Cardiac septum (tissue), 1 donor: ENCODE measurements at regions of chr20 and their contacts with region 1.

Region 1: DNA sequence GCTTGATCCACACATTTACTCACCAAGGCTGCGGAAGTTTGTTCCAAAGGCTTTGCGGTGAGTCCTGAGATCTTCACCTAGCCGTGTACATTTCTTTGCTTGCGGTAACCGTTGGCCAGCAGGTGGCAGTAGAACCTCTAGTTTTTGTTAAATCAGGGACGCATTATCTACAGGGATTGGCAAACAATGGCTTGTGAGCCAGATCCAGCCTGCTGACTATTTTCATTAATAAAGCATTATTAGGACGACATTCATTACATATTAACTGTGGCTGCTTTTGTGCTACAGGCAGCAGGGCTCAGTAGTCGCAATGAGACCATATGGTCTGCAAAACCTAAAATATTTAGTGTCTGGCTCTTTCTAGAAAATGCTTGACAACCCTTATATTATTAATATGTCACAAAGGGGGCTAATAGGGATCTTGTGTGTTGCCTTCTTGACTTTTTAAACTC is 174.1 kb downstream of the DOK5 start:
- DNase-seq: no peak

Region 2: GRCh38 chr20:54097236-54097529 is 552.4 kb before region 1 on chr20:
- intact Hi-C with region 1: loop called (anchors 5 kb)
- DNase-seq: no peak

Region 3: DNA sequence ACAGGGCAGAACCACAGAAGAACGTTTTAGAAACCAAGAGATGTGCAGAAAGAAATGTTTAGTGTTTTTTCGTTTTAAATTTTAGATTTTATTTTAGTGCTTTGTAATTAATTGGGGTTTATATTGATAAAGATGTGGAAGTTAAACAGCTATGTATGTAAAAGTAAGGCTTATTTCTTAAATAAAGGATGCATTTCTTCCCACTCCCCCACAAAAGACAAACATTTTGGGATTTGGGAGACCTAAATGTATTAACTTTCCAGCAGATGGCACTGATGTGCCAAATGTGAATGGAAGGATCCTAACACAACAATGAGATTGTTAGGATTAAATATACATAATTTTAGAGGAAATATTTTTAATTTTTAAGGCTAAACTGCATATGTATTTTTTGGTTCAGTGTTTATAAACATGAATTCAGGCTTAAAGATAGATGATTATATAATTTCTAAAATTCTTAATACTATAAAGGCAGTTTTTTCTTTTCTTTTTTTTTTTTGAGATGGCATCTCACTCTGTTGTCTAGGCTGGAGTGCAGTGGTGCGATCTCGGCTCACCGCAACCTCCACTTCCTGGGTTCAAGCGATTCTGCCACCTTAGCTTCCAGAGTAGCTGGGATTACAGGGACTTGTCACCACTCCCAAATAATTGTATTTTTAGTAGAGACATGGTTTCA is 429.6 kb before region 1 on chr20:
- intact Hi-C with region 1: loop called (anchors 2 kb)
- DNase-seq: no peak